Posterior cingulate gyrus (tissue), 11 donors: ENCODE measurements at regions of chr17 and their contacts with region 1.

Region 1: DNA sequence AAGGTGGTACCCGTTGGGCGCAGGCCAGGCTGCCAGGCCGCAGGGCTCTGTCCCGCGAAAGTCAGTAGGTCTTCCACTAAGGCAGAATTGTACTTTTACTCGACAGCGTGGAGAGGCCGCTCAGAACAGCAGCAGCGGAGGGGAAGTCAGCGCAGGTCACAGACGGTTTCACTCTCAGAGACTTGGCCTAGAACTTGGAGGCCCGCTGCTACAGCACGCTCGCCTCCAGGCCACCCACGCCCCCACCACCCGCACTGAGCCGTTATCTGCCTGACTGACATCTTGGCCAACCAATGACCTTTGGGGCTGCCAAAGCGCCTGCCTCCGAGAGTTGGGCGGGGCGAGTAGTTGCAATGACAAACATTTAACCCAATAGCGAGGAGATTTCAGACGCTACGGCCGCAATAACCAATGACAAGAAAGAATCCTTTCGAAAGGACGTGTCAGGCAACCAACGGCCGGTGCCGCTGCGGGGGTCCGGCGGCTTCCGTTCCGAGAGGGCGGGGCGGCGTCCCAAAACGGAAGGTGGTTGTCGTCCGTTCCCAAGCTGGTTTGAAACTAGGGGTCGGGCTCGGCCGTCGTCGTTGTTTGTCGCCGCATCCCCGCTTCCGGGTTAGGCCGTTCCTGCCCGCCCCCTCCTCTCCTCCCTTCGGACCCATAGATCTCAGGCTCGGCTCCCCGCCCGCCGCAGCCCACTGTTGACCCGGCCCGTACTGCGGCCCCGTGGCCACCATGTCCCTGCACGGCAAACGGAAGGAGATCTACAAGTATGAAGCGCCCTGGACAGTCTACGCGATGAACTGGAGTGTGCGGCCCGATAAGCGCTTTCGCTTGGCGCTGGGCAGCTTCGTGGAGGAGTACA is at the start of gene DCAF7:
- DNase-seq: peak; percentile 99 to 100 (median 99)

Region 2: GRCh38 chr17:63445979-63446691 is 104.0 kb before region 1 on chr17 and contains the start of gene CYB561:
- intact Hi-C with region 1: loop called (anchors 10 kb)
- DNase-seq: peak in 9 of 10 donors; percentile 36 to 95 (median 66)

Region 3: GRCh38 chr17:63571763-63572271 is 21.6 kb after region 1 on chr17:
- intact Hi-C with region 1: no loop called
- DNase-seq: no peak